ENCODE measurements at regions of chr15 and their contacts with region 1.

Region 1: DNA sequence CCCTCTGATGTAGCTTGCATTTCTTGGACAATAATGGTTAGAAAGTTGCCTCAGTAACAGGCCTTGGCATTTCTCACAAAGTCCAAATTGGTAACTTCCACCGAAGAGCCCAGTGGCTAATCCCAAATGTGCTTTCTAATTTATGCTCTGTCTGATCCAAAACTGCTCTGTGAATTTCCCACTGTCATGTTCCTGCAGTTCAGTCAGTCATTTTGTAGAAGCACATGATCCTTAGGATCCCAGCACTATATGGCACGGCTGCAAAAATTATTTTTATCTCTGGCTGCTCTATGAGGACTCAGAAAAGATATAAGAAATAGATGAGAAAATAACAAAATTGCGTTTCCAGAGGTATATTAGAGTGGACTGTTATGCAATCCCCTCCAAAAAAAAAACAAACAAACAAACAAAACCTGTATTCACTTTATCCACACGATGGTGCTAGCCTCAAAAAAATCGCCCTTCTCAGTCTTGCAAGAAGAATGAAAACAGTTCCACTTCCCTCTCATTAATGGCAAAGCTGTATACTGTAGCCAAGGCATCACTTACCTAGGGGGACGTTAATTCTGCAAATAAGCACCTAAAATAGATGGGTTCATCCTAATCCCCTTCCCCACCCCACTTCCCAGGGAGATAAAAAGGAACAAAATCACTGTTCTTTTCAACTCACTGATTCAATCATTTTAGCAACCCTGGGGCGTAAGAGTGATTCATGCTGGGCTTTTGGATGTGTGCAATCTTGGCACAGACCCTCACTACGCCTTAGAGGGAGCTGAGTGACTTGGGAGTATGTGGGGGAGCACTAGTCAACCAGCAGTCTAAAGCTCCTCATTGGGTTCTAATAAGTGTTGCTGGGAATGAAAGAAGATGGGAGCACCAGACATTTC is 61.3 kb downstream of the TMCO5A start:
- DNase-seq: no peak
- H3K4me3 ChIP-seq: no peak overlapping the region
- H3K27ac ChIP-seq: no peak overlapping the region
- H3K4me1 ChIP-seq: peaks cover 0 to 5% (median 2%) of the 10 kb centered on the region in 4 donors
- H3K27me3 ChIP-seq: no peaks in the 10 kb centered on the region
- CTCF ChIP-seq: peak; percentile 43 to 57 (median 51)
- EP300 ChIP-seq: no peak
- POLR2A ChIP-seq: no peak

Region 2: DNA sequence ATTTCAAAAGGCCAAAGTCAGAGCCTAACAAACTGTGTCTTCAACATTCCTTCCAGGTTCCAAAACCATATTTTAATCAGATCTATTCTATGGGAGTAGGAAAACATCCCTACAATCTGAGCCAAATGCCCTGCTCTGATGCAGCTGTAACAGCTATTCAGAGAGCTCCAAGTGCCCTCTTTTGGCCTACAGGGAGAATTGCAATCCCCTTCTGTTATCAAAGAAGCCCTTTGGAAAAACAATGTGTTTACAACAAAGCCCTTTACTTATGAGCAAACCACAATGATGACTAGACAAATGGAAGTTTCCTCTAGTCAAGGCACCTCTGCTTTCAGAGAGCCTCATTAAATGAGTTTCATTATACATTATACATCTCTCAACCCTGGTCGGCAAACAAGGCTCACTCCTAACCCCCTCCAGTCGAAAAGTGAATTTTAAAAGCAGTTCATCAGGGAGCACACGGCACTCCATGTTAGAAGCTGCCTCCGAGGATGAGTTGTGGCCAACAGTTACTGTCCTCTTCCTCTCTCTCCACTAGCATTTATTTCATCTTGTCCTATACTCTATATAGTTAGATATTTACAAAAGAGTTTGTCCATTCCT is 103.8 kb before region 1 on chr15:
- intact Hi-C with region 1: no loop called
- DNase-seq: no peak
- H3K4me3 ChIP-seq: no peak overlapping the region
- H3K27ac ChIP-seq: no peak overlapping the region
- H3K4me1 ChIP-seq: peaks cover 0 to 7% (median 5%) of the 10 kb centered on the region in 4 donors
- H3K27me3 ChIP-seq: no peaks in the 10 kb centered on the region
- CTCF ChIP-seq: peak; percentile 63 to 82 (median 65)
- EP300 ChIP-seq: no peak
- POLR2A ChIP-seq: no peak

Region 3: DNA sequence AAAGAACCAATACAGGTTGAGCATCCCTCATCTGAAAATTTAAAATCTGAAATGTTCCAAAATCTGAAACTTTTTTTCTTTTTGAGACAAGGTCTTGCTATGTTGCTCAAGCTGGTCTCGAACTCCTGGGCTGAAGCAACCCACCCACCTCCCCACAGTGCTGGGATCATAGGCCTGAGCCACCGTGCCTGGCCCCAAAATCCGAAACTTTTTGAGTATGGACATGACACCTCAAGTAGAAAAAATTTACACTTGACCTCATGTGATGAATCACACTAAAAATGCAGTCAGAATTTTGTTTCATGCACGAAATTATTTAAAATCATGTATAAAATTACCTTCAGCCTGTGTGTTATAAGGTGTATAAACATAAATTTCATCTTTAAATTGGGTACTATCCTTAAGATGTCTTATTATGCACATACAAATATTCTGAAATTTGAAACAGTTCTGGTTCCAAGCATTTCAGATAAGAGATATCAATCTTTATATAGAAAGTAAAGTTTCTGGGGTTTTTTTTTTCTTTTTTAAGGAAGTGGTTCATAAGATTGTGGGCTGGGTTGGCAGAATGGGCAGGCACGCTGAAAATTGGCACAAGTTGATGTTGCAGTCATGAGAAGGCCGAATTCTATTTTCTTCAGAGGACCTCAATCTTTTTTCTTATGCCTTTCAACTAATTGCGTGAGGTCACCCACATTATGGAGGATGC is 329.4 kb after region 1 on chr15:
- intact Hi-C with region 1: no loop called
- DNase-seq: no peak
- H3K4me3 ChIP-seq: no peak overlapping the region
- H3K27ac ChIP-seq: no peak overlapping the region
- H3K4me1 ChIP-seq: no peaks in the 10 kb centered on the region
- H3K27me3 ChIP-seq: no peaks in the 10 kb centered on the region
- CTCF ChIP-seq: no peak
- EP300 ChIP-seq: no peak
- POLR2A ChIP-seq: no peak

Region 4: DNA sequence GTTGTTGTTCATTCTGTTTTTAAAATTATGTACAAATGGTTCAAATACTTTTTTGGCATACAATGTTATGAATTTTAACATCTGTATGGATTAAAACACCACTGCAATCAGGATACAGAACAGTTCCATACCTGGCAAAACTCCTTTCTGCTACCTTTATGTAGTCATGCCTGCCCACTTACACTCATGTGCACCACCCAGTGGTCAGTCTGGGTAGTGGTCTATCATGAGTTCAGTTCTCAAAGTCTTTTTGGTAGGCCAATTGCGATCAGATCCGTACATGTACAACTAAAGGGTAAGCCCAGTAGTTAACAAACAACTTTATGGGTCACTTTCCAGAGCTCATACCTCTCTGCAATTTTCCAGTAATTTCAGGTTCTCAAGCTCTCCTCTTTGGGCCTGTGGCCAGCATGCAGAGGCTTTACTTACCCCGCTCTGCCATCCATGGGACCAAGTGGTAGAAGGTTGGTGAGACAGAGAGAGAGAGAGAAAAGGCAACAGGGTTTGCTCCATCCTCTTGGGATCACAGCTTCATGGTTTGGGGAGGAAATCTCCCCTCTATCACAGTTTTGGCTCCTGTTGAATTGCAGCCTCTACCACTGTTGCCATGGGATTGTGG is 394.3 kb after region 1 on chr15:
- intact Hi-C with region 1: loop called (anchors 10 kb)
- DNase-seq: no peak
- H3K4me3 ChIP-seq: no peak overlapping the region
- H3K27ac ChIP-seq: no peak overlapping the region
- H3K4me1 ChIP-seq: no peaks in the 10 kb centered on the region
- H3K27me3 ChIP-seq: no peaks in the 10 kb centered on the region
- CTCF ChIP-seq: peak; percentile 68 to 79 (median 71)
- EP300 ChIP-seq: no peak
- POLR2A ChIP-seq: no peak

Measured in esophagus muscularis mucosa (tissue), 4 donors.